Keratinocyte (primary cell): ENCODE measurements at regions of chr2 and their contacts with region 1.

Region 1: DNA sequence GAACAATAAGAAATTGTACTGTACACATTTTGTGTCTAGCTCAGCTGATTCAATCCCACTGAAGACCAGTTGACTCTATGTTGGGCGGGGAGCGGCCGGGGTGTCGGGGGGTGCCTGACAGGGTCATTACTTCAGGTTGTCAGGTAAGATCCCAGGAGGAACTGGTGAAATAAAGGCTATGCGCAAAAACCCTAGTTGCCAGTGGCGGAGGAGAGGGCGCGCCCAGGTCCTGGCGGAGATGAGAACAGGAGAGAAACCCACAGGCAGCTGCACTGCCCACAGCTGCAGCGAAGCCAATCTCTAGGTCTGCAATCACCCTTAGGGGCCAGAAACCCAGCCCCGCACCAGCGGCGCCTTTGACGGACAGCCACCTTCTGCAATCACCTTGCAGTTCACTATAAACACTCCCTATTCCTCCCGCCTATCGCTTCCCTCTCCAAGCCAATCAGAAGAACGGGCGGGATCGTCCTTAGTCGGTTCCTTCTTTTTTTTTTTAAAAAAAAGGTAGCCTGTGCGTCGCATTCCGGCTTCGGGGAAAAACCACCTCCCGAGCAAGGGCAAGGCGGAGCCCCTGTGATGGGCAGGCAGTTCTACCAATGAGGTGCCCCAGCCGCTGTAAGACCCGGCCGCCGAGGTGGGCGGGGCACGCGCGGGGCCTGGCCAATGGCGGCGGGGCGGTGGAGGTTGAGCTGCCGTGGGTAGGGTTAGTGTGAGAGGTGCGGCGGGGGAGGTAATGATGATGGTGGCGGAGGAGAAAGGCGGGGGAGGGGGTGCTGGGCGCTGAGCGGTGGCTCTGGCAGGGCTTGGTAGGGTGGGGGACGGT is at the start of gene EHBP1:
- DNase-seq: peak; percentile 98
- H3K4me3 ChIP-seq: peak within 1 kb of the TSS; percentile 93 to 96 (median 94)
- H3K27ac ChIP-seq: peak within 1 kb of the TSS; percentile 81
- H3K4me1 ChIP-seq: peaks cover 21% of the 10 kb centered on the region
- H3K27me3 ChIP-seq: no peaks in the 10 kb centered on the region
- CTCF ChIP-seq: no peak
- polyA plus RNA-seq, gene EHBP1: 42.3 to 78.5 TPM (median 59.0 TPM) in 3 replicates

Region 2: DNA sequence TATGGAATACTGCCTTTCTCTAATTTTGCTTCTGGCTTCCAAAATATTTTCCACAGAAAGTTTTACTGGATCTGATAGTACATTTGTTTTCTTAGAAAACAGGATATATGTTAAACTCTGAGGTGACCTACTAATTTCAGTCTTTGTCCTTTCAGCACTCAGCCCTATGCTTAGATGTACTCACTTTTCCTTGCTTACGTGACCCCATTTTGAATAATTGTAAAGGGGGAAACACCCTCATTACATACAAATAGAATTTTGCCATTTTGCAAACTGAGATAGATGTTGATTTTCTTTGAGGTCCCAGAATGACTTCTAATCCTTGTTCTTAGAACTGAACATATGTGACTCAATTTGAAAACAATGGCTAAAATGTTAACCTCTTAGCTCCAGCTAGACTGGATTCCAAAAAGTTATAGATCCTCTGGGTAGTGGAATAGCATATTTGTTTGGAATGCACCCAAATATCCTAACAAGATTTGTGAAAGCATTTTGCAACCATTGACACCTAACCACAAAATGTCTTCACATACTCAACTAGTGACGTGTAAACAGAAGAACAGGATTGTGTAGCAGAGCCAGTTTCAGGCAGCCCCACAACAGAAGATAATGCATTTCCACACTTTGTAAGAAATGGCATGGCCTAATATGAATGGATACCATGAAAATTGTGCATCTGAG is 44.5 kb before region 1 on chr2:
- dilution Hi-C with region 1: no loop called
- DNase-seq: peak; percentile 68
- H3K4me3 ChIP-seq: peak overlapping the region in 2 of 3 experiments; percentile 43 to 61
- H3K27ac ChIP-seq: peak overlapping the region; percentile 74
- H3K4me1 ChIP-seq: peaks cover 47% of the 10 kb centered on the region
- H3K27me3 ChIP-seq: no peaks in the 10 kb centered on the region
- CTCF ChIP-seq: no peak

Region 3: GRCh38 chr2:62760555-62760954 is 55.3 kb after region 1 on chr2:
- dilution Hi-C with region 1: loop called (anchors 10 kb)
- DNase-seq: no peak
- H3K4me3 ChIP-seq: no peak overlapping the region
- H3K27ac ChIP-seq: no peak overlapping the region
- H3K4me1 ChIP-seq: peaks cover 6% of the 10 kb centered on the region
- H3K27me3 ChIP-seq: no peaks in the 10 kb centered on the region
- CTCF ChIP-seq: no peak